ENCODE measurements at regions of chr7 and their contacts with region 1.

Region 1: DNA sequence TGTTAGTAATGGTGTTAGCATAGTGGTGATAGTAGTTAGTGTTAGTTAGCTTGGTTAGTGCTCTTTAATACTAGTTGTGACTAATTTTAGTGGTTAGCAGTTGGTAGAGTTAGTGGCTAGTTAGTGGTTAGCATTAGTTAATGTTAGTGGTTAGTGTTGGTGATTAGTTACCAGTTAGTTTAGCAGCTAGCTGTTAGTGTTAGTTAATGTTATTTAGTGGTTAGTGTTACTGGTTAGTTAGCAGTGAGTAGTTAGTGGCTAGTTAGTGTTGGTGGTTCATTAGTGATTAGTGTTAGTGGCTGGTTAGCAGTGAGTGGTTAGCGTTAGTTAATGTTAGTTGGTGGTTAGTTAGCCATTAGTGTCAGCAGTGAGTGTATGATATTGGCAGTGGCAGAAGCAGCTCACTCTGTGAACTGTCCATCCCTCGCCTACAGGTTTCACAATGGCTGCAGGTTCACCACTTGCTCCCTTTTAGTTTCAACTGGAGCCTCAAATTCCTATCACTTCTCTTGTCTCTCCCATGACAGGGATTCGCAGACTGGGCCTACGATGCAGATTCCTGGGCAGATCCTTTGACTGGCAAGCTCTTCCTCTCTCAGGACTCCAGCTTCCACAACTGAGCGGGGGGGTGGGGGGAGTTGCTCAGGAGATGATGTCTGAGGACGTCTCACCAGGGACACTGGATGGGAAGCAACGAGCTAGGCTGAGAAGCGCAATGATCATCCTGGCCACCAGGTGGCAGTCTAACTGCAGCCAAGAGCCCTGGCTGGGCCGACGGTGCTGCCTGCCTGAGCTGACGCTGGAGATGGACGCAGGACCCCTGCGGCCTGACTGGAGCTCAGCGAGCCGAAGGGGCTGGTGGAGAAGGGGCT is 19.5 kb downstream of the GHRHR start:
- DNase-seq: peak; percentile 73 to 91 (median 82)
- ATAC-seq: peak; percentile 94
- H3K4me3 ChIP-seq: no peak overlapping the region
- H3K27ac ChIP-seq: no peak overlapping the region
- H3K4me1 ChIP-seq: peaks cover 2 to 5% of the 10 kb centered on the region in 2 donors
- H3K27me3 ChIP-seq: peaks cover 0 to 16% of the 10 kb centered on the region in 2 donors
- CTCF ChIP-seq: peak; percentile 85 to 93

Region 2: DNA sequence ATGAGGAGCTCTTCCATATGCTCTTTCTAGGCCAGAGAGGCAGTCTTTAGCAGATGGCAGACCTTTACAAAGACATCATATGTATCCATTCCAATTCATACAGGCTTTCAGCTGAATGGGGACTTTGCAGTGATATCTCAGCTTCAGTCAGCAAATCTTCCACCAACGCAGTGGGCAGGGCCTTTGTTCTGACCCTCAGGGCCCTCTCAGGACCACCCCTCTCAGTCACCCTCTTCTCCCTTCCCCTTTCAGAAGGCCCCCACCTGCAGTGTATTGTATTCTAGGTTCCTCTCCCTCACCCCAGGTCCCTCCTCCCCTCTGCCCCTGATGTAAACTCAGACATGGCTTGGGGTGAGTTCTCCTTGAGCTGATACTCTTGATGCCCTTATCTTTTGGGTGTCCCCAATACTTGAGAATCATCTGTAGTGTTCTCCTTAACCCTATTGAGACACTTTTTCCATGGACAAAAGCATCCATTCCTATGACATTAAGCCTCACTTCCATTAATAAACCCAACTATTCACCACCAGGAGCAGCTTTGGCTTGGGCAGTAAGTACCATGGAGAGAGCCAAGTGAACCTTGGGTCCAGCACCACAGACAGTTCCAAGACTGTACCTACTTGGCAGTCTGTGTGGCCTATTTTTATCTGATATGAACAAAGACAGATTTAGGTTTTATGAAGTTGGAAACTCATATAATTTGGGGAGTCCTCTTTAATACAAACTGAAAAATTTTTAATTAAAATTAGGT is 131.5 kb after region 1 on chr7:
- intact Hi-C with region 1: loop called in 1 of 2 experiments (anchors 10 kb)
- DNase-seq: peak in 1 of 4 donors; percentile 48
- ATAC-seq: peak; percentile 76
- H3K4me3 ChIP-seq: no peak overlapping the region
- H3K27ac ChIP-seq: no peak overlapping the region
- H3K4me1 ChIP-seq: no peaks in the 10 kb centered on the region
- H3K27me3 ChIP-seq: peaks cover 0 to 3% of the 10 kb centered on the region in 2 donors
- CTCF ChIP-seq: no peak

Region 3: GRCh38 chr7:31410265-31410664 is 427.0 kb after region 1 on chr7:
- intact Hi-C with region 1: no loop called
- DNase-seq: no peak
- ATAC-seq: no peak
- H3K4me3 ChIP-seq: no peak overlapping the region
- H3K27ac ChIP-seq: no peak overlapping the region
- H3K4me1 ChIP-seq: no peaks in the 10 kb centered on the region
- H3K27me3 ChIP-seq: no peaks in the 10 kb centered on the region
- CTCF ChIP-seq: no peak

Measured in left lung (tissue), 14 donors.